ENCODE measurements at regions of chr20 and their contacts with region 1.

Region 1: GRCh38 chr20:14859627-14860026 is 522.2 kb upstream of the FLRT3 start:
- DNase-seq: no peak
- H3K4me3 ChIP-seq: no peak overlapping the region
- H3K27ac ChIP-seq: no peak overlapping the region
- H3K4me1 ChIP-seq: peaks cover 0 to 13% (median 0%) of the 10 kb centered on the region in 4 donors
- H3K27me3 ChIP-seq: no peaks in the 10 kb centered on the region
- CTCF ChIP-seq: no peak
- EP300 ChIP-seq: no peak
- POLR2A ChIP-seq: no peak

Region 2: DNA sequence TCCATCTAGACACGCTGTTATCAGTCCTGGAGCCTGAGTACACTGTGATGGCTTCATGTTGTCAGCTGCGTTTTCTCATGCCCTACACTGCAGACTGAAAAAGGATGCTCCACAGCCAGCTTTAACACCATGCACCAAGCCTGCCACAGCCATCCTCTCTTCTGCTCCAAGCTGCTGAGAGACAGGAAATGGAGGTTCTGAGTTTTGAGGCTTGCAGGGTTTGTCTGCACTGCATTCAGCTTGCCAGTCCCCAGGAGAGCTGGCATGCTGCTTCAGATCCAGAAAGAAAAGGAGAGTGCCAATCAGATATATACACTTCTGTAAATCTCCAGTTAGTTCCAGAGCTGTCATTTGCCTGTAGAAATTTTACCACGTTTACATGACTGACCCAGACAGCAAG is 28.5 kb after region 1 on chr20:
- in situ Hi-C with region 1: no loop called
- intact Hi-C with region 1: loop called (anchors 1 kb)
- DNase-seq: no peak
- H3K4me3 ChIP-seq: no peak overlapping the region
- H3K27ac ChIP-seq: no peak overlapping the region
- H3K4me1 ChIP-seq: no peaks in the 10 kb centered on the region
- H3K27me3 ChIP-seq: no peaks in the 10 kb centered on the region
- CTCF ChIP-seq: no peak
- EP300 ChIP-seq: no peak
- POLR2A ChIP-seq: no peak

Region 3: DNA sequence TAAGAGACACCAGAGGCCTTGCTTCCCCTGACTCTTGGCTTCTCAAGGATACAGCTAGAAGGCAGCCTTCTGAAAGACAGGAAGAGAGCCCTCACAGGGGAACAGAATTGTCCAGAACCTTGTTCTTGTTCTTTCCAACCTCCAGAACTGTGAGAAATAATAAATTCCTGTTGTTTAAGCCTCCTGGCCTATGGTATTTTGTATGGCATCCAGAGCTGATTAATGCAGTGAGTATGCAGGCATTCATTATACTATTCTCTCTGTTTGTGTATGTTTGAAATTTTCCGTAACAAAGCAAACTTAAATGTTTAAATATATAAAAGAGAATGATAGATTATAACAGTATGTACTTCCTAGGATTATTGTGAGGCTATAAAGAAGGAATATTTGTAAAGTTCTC is 381.2 kb after region 1 on chr20:
- in situ Hi-C with region 1: no loop called
- intact Hi-C with region 1: no loop called
- DNase-seq: no peak
- H3K4me3 ChIP-seq: no peak overlapping the region
- H3K27ac ChIP-seq: no peak overlapping the region
- H3K4me1 ChIP-seq: no peaks in the 10 kb centered on the region
- H3K27me3 ChIP-seq: no peaks in the 10 kb centered on the region
- CTCF ChIP-seq: no peak
- EP300 ChIP-seq: no peak
- POLR2A ChIP-seq: no peak

Measured in transverse colon (tissue), 4 donors.